ENCODE measurements at regions of chr12 and their contacts with region 1.

Region 1: DNA sequence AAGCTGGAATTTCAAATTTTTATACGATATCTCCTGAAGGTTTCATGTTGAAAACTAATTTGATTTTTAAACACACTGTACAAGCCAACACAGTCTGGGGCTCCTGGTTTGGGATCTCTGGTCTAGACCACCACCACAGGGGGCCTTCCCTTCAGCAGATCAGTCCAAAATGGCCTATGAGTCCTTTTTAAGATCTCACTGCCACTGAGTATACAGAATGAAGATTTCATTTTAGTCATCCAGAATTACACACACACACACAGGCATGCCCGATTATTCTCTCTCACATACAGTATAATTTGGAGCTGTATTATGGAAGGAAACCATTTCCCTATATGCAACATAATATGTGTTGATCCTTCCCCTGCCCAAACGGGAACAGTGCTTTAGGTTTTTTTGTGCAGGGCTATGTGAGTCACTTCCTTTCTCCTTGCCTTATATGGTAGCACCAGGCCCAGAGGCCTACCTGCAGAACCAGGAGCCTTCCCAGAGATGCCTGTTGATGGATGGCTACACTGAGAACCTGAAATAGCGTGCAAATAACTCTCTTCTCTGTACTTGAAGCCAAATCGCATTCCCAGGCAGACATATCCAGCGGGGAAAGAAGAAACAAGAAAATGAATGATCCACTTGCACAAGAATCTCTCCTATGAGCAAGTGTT is 28.1 kb upstream of the WNK1 start:
- H3K4me3 Mint-ChIP-seq: no peak overlapping the region
- H3K27ac Mint-ChIP-seq: peak overlapping the region; percentile 82
- H3K4me1 Mint-ChIP-seq: peaks cover 43% of the 10 kb centered on the region
- H3K27me3 Mint-ChIP-seq: no peaks in the 10 kb centered on the region

Region 2: GRCh38 chr12:662566-663292 is 61.6 kb before region 1 on chr12:
- intact Hi-C with region 1: loop called (anchors 10 kb)
- H3K4me3 Mint-ChIP-seq: no peak overlapping the region
- H3K27ac Mint-ChIP-seq: peak overlapping the region; percentile 63
- H3K4me1 Mint-ChIP-seq: peaks cover 36% of the 10 kb centered on the region
- H3K27me3 Mint-ChIP-seq: no peaks in the 10 kb centered on the region

Region 3: DNA sequence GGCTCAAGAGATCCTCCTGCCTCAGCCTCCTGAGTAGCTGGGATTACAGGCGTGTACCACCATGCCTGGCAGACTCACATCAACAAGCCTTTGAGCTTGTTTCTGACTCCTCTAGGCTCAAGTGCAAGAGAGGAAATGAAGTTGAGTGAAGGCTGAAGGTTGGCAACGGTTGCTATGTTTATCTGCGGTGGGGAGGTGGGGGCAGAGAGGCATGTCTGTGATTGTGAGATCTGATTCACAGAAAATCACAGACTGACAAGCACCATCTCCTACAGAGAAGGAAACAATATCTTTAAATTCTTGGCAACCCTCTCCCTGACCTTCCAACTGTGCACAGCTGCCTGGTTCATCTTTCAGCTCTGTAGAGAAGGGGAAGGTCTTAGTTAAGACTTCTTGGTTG is 38.9 kb before region 1 on chr12:
- intact Hi-C with region 1: loop called (anchors 5 kb)
- H3K4me3 Mint-ChIP-seq: no peak overlapping the region
- H3K27ac Mint-ChIP-seq: no peak overlapping the region
- H3K4me1 Mint-ChIP-seq: no peaks in the 10 kb centered on the region
- H3K27me3 Mint-ChIP-seq: no peaks in the 10 kb centered on the region

Region 4: DNA sequence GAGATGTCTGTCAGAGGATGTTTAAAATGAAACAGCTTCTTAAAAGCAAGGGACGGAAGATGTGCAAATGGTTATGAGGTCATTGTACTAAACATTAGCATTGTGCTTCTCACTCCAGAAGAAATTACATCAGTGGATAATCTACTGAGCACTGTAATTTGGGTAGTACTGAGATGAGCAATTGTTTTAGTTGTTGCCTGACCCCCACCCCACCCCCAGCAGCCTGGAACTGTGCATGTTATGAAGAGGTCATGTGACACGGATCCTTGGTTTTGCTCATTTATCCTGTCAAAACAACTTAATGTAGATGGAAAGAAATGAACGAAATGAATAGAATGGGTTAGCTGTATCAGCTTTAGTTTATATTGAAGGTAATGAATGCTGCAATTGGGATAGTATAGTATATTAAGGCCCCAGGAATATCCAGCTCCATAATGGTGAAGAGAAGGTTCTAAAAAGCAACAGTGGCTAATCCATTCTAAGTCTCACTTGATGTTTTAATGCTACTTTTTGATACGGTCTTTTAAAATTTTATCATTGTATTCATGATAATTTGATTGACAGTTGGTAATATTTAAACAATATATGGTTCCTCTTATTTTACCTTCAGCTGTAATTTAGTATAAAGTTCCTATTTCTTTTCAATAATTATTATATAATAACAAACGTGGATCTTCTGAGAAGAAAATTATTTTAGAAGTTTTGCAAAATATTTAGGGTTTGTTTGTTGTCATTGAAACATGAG is 86.5 kb after region 1 on chr12:
- intact Hi-C with region 1: no loop called
- H3K4me3 Mint-ChIP-seq: no peak overlapping the region
- H3K27ac Mint-ChIP-seq: no peak overlapping the region
- H3K4me1 Mint-ChIP-seq: peaks cover 36% of the 10 kb centered on the region
- H3K27me3 Mint-ChIP-seq: no peaks in the 10 kb centered on the region

Measured in dendritic cell treated with granulocyte-macrophage colony-stimulating factor and Interleukin-4, amounts not matched to agents 40 ng/mL and 50 ng/mL, for 4 days (primary cell).